Motor neuron (in vitro differentiated cells): ENCODE measurements at regions of chr10 and their contacts with region 1.

Region 1: GRCh38 chr10:59240582-59241183 is 64.2 kb downstream of the PHYHIPL start:
- ATAC-seq: no peak
- H3K4me3 ChIP-seq: no peak overlapping the region
- H3K27ac ChIP-seq: no peak overlapping the region
- H3K4me1 ChIP-seq: peaks cover 0 to 3% of the 10 kb centered on the region in 2 donors

Region 2: DNA sequence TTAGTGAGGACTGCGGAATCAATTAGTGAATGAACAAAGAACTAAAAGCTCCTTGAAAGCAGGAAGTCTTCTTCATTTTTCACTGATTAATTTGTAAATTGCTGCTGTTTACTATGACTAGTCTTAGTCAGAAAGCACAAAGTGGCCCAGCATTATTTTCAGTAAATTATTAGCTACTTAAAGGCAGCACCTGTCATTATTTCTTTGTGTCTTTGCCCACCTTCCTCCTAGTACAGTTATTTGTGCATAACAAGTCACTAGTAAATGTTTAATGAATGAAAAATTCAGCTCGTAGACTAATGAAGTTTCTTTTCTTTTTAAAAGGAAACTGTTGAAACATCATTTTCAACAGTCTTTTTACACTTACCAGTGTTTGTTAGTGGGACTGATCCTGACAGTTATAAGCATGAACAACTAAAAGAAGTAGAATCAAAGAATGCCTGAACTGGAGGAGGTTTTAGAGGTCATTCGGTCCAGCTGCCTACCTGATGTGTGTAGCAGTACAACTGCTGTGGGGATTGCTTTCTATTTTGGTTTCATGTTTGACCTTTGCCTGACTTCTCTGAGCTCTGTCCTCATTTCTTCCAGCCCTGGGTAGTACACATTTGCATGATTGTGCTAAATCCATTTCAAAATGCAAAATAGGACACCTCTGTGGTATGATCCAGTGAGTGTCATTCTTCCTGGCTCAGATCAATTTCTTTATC is 204.2 kb before region 1 on chr10:
- in situ Hi-C with region 1: no loop called
- ATAC-seq: peak in 2 of 8 experiments; percentile 74 to 86
- H3K4me3 ChIP-seq: no peak overlapping the region
- H3K27ac ChIP-seq: no peak overlapping the region
- H3K4me1 ChIP-seq: peaks cover 0 to 4% of the 10 kb centered on the region in 2 donors

Region 3: DNA sequence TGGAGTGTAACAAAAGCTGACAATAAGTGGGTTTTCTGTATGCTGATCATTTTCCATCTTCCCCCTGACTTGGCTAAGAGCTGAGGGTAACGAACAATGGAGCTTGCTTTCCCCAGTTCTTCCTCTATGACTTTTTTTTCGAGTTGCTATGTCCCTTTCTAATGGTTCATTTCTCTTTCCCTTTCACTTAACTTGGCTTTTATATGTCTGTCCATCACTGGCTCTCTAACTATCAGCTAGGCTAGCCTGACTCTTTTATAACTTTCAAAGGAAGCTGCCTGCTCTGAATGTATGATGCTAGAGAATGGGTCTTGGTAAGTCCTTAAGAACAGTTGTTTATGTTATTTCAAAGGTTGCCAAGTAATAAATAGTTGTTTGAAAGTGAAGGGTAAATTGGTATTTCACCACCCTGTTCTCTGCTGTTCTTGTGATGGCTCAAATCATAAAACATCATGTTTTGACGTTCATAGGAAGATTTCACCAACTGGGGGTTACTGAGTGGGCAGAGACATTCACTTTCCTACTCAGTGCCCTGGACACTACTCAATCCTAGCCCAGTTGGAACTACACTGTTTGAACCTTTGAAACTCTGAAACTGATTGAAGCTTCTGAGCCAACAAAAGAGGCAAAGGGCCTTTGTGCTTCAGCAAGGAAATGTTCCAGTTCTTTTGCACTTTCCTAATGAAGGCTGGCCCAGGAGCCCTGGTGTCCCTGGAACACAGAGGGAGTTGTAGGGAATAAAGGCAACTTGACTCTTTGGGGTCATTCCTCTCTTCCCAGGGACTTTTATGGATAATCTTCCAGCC is 149.7 kb before region 1 on chr10:
- in situ Hi-C with region 1: no loop called
- ATAC-seq: peak in 3 of 8 experiments; percentile 65 to 93 (median 76)
- H3K4me3 ChIP-seq: no peak overlapping the region
- H3K27ac ChIP-seq: no peak overlapping the region
- H3K4me1 ChIP-seq: peaks cover 0 to 5% of the 10 kb centered on the region in 2 donors

Region 4: DNA sequence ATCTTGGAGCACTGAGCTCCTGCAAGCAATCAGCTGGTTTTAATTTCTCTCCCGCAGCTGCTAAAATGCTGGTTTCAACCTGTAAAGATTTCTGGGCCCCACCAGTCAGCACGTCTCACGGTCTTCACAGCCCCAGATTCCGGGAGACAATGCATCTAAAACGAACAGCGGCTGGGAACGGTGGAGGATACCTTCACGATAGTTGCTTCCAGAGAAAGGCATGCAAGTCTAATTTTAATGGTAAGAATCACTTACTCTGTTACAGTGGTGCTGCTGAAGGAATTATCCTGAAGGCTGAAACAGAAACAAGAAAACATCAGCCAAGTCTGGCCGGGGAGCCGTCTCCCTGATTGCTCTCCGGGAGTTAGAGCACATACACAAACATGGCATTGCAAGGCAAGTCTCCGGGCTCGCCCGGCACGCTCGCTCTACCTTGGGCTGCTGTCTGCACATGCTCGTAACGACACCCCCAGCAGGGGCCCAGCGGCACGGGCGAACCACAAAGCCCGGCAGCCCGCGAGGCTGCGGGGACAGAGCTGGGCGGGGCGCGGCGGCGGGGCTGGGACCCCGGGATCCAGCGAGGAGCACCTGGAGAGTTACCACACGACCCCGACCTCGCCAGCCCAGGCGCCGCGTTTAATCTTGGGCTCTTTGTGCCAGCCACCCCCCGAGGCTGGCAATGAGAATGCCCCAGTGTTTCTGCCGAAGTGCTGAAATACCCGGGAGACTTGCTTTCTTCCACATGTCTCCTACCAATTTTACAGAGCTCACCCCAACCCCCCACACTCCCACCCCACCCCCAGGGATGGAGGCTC is 121.7 kb after region 1 on chr10 and contains the start of gene FAM13C:
- in situ Hi-C with region 1: no loop called
- ATAC-seq: peak; percentile 84 to 92 (median 87)
- H3K4me3 ChIP-seq: peak within 1 kb of the TSS; percentile 44 to 53 (median 49)
- H3K27ac ChIP-seq: peak within 1 kb of the TSS; percentile 57 to 77
- H3K4me1 ChIP-seq: peaks cover 16 to 26% of the 10 kb centered on the region in 2 donors
- total RNA-seq, gene FAM13C: 0.67 to 29.1 (median 14.9) TPM in 7 of 8 experiments, not detected in the other

Region 5: GRCh38 chr10:59580026-59580863 is 339.6 kb after region 1 on chr10:
- in situ Hi-C with region 1: loop called in 2 of 9 experiments (anchors 10 to 25 kb)
- ATAC-seq: peak in 4 of 8 experiments; percentile 29 to 67 (median 50)
- H3K4me3 ChIP-seq: no peak overlapping the region
- H3K27ac ChIP-seq: no peak overlapping the region
- H3K4me1 ChIP-seq: peaks cover 0 to 4% of the 10 kb centered on the region in 2 donors